Right cardiac atrium (tissue), 5 donors: ENCODE measurements at regions of chr9 and their contacts with region 1.

Region 1: DNA sequence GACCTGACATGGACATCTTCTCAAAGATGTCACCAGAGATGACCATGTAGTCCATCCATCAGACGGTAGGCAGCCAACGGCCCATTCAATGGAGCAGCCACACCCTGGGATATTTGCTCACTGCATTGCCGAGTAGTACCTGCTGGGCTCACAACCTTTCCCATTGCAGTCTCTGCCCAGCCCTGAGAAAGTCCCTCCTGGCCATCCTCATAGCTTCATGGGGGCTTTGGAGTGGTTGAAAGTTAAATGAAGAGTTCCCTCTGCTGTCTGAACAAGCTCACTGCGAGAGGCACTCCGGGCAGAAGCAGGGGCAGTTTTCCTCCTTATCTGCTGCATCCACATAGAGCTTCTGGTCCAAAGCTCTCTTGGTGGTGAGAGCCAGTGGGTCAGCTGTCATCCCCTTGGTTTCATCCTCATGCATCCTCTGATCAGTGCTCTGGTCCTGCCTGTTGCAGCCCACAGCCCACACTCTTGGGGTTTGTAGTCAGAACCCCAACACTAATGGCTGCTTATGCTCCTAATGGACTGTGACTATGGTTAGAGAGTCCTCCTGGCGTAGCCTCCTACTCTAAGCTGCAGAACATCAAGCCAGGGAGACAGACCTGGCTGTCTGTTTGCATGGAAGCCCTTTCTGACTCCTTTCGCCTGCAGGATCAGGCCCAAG is 23.4 kb downstream of the TNFSF8 start:
- DNase-seq: no peak
- ATAC-seq: peak; percentile 11 to 61
- H3K4me3 ChIP-seq: no peak overlapping the region
- H3K27ac ChIP-seq: no peak overlapping the region
- H3K4me1 ChIP-seq: no peaks in the 10 kb centered on the region
- H3K27me3 ChIP-seq: no peaks in the 10 kb centered on the region

Region 2: GRCh38 chr9:114413861-114414301 is 493.2 kb before region 1 on chr9:
- intact Hi-C with region 1: loop called in 1 of 4 experiments (anchors 10 kb)
- DNase-seq: no peak
- ATAC-seq: peak in 1 of 2 donors; percentile 68
- H3K4me3 ChIP-seq: no peak overlapping the region
- H3K27ac ChIP-seq: no peak overlapping the region
- H3K4me1 ChIP-seq: no peaks in the 10 kb centered on the region
- H3K27me3 ChIP-seq: no peaks in the 10 kb centered on the region

Region 3: DNA sequence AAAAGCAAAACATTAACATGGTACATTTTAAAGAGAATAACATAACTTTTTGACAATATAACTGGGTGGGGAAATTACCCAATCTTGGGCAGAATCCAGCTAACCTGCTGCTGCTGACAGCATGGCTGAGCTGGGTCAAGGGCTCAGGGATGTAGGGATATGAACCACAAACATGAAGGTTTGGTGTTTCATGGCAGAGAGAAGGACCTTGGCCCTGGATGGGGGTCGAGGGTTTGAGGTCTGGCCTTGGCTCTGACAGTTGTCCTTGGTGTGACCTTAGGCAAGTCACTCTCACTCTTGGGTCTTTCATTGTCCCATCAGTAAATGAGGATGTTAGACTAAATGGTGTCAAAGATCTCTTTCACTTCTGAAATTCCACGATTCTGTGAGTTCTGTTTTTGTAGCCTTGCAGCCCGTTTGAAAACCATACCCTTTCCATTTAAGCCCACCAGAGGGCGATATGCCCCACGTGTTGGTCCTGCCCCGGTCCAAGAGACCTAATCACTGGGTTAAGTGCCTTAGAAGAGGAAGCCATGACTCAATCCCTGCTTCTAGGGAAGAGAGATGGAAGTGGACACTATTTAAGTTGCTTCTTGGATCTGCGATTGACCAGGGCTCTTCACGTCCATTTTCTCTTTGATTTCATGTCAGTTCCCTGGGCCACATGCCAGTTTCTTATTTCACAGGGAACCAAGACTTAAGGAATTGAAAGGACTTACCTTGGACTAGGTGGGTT is 168.3 kb before region 1 on chr9:
- intact Hi-C with region 1: loop called in 3 of 4 experiments (anchors 2 to 5 kb)
- DNase-seq: peak; percentile 54 to 70 (median 70)
- ATAC-seq: peak; percentile 85 to 94
- H3K4me3 ChIP-seq: no peak overlapping the region
- H3K27ac ChIP-seq: no peak overlapping the region
- H3K4me1 ChIP-seq: no peaks in the 10 kb centered on the region
- H3K27me3 ChIP-seq: no peaks in the 10 kb centered on the region

Region 4: GRCh38 chr9:114745108-114745848 is 161.8 kb before region 1 on chr9:
- intact Hi-C with region 1: loop called in 1 of 4 experiments (anchors 5 kb)
- DNase-seq: no peak
- ATAC-seq: peak in 1 of 2 donors; percentile 19
- H3K4me3 ChIP-seq: no peak overlapping the region
- H3K27ac ChIP-seq: no peak overlapping the region
- H3K4me1 ChIP-seq: no peaks in the 10 kb centered on the region
- H3K27me3 ChIP-seq: no peaks in the 10 kb centered on the region

Region 5: GRCh38 chr9:115071176-115071575 is 164.1 kb after region 1 on chr9:
- intact Hi-C with region 1: no loop called
- DNase-seq: no peak
- ATAC-seq: no peak
- H3K4me3 ChIP-seq: no peak overlapping the region
- H3K27ac ChIP-seq: no peak overlapping the region
- H3K4me1 ChIP-seq: no peaks in the 10 kb centered on the region
- H3K27me3 ChIP-seq: no peaks in the 10 kb centered on the region